Caco-2 (cell line): ENCODE measurements at regions of chr9 and their contacts with region 1.

Region 1: GRCh38 chr9:111975709-111976108 is 79.1 kb downstream of the UGCG start:
- DNase-seq: peak; percentile 45 to 64
- H3K4me3 ChIP-seq: no peak overlapping the region
- H3K4me3 Mint-ChIP-seq: no peak overlapping the region
- H3K27ac Mint-ChIP-seq: no peak overlapping the region
- H3K4me1 ChIP-seq: peaks cover 47% of the 10 kb centered on the region
- H3K4me1 Mint-ChIP-seq: peaks cover 31% of the 10 kb centered on the region
- H3K27me3 ChIP-seq: no peaks in the 10 kb centered on the region
- H3K27me3 Mint-ChIP-seq: no peaks in the 10 kb centered on the region
- CTCF ChIP-seq: peak in 1 of 2 experiments; percentile 21

Region 2: DNA sequence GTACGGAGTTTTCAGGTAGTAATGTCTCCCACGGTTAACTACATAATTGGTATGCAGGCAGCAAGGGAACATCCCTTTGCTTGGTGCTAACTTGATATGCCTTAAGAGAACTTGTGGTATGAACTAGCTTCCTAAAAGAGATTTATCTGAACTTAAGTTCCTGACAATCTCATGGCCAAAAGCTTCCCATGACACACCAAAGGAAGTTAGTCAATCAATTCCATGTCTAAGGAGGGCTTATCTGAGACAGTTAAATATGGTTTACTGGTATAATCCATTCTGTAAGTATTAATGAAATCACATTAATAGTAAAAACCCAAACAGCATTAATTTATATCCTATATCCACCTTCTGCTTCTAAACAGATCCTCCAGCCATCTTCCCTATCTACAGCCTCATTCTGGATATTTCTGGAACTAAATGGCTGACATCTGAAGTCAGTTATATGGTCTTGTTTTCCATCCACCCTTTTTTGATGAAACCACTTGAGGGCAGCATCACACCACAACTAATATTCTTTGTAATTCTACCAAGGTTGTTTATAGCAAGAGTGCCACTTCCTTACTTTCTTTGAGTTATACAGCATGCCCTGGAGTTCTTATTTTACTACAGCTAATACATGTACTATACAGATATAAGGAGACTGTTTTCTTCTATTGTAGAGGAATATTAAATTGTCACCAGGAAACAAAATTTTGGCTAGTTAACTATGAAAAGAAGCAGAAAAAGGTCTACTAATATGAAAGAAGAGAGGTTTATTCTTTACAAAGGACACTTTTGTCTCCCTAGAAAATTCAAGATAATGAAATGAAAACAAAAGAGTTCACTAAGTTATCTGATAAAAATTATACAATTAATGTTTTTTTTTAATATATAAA is 215.7 kb before region 1 on chr9:
- CTCF ChIA-PET with region 1: no interaction called
- POLR2A ChIA-PET with region 1: no interaction called
- intact Hi-C with region 1: loop called (anchors 1 kb)
- DNase-seq: peak; percentile 54 to 70
- H3K4me3 ChIP-seq: no peak overlapping the region
- H3K4me3 Mint-ChIP-seq: no peak overlapping the region
- H3K27ac Mint-ChIP-seq: no peak overlapping the region
- H3K4me1 ChIP-seq: no peaks in the 10 kb centered on the region
- H3K4me1 Mint-ChIP-seq: no peaks in the 10 kb centered on the region
- H3K27me3 ChIP-seq: no peaks in the 10 kb centered on the region
- H3K27me3 Mint-ChIP-seq: no peaks in the 10 kb centered on the region
- CTCF ChIP-seq: peak; percentile 48 to 77

Region 3: DNA sequence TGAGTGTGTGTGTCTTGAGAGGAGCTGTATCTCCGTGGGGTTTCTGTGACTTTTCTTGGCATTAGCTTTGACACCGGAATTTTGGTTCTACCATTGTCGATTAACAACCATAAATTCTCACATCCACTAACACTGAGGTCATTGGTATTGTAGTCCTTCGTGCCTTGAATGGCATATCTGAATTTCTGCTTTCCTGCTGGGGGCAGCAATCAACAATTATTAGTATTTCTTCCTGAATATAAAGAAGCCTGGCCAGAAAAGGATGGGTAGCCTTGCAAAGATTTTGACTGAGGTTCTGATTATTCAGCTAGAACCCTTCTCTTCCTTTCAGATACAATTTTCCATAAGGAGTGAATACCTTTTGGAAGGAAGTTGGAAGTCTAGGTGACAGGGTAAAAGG is 147.5 kb before region 1 on chr9:
- CTCF ChIA-PET with region 1: no interaction called
- POLR2A ChIA-PET with region 1: no interaction called
- intact Hi-C with region 1: loop called (anchors 1 kb)
- DNase-seq: peak in 1 of 2 experiments; percentile 22
- H3K4me3 ChIP-seq: no peak overlapping the region
- H3K4me3 Mint-ChIP-seq: no peak overlapping the region
- H3K27ac Mint-ChIP-seq: no peak overlapping the region
- H3K4me1 ChIP-seq: no peaks in the 10 kb centered on the region
- H3K4me1 Mint-ChIP-seq: no peaks in the 10 kb centered on the region
- H3K27me3 ChIP-seq: no peaks in the 10 kb centered on the region
- H3K27me3 Mint-ChIP-seq: no peaks in the 10 kb centered on the region
- CTCF ChIP-seq: peak in 1 of 2 experiments; percentile 6

Region 4: DNA sequence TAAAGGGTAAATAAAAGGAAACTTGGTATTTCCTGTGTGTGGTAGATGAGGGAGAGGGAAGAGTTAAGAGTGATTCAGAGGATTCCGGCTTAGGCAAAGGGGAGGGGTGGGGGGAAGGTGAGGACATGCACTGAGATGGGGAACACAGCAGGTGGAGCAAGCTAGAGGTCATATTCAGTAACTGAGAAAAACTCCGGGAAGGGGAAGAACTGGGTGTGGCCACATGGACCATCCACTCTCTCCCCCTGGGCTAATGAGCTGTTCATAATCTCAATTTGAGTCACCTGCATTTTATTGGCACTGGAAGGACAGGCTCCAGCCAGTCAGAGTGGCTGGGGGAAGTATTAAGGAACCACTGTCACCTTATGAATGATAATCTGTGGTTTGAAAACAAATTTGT is 124.1 kb before region 1 on chr9:
- CTCF ChIA-PET with region 1: no interaction called
- POLR2A ChIA-PET with region 1: no interaction called
- intact Hi-C with region 1: no loop called
- DNase-seq: peak; percentile 55 to 82
- H3K4me3 ChIP-seq: no peak overlapping the region
- H3K4me3 Mint-ChIP-seq: no peak overlapping the region
- H3K27ac Mint-ChIP-seq: no peak overlapping the region
- H3K4me1 ChIP-seq: peaks cover 38% of the 10 kb centered on the region
- H3K4me1 Mint-ChIP-seq: peaks cover 22% of the 10 kb centered on the region
- H3K27me3 ChIP-seq: no peaks in the 10 kb centered on the region
- H3K27me3 Mint-ChIP-seq: no peaks in the 10 kb centered on the region
- CTCF ChIP-seq: no peak

Region 5: GRCh38 chr9:111909441-111909840 is 66.3 kb before region 1 on chr9:
- CTCF ChIA-PET with region 1: no interaction called
- POLR2A ChIA-PET with region 1: no interaction called
- intact Hi-C with region 1: no loop called
- DNase-seq: no peak
- H3K4me3 ChIP-seq: no peak overlapping the region
- H3K4me3 Mint-ChIP-seq: no peak overlapping the region
- H3K27ac Mint-ChIP-seq: no peak overlapping the region
- H3K4me1 ChIP-seq: peaks cover 15% of the 10 kb centered on the region; the same call in 1 of the 2 replicates
- H3K4me1 Mint-ChIP-seq: peaks cover 14% of the 10 kb centered on the region
- H3K27me3 ChIP-seq: no peaks in the 10 kb centered on the region
- H3K27me3 Mint-ChIP-seq: no peaks in the 10 kb centered on the region
- CTCF ChIP-seq: no peak

Region 6: DNA sequence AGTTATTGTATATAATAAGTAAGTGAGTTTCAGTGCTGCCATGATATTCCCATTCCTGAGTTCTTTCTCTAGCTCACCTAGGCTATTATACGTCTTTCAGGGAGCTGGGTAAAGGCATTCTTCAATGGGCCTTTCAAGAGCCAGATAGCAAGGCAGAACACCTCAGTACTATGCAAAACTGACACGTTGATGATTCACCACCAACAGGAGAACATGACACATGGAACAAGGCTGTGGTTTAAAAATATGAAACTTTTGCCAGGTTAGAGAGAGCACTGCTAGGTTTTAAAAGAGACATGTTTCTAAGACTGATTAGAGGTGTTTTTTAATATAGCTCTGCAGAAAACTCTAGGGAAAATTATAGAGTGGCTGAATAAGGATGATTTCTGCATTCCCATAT is 16.8 kb after region 1 on chr9:
- CTCF ChIA-PET with region 1: no interaction called
- POLR2A ChIA-PET with region 1: no interaction called
- intact Hi-C with region 1: no loop called
- DNase-seq: no peak
- H3K4me3 ChIP-seq: no peak overlapping the region
- H3K4me3 Mint-ChIP-seq: no peak overlapping the region
- H3K27ac Mint-ChIP-seq: no peak overlapping the region
- H3K4me1 ChIP-seq: peaks cover 21% of the 10 kb centered on the region
- H3K4me1 Mint-ChIP-seq: peaks cover 12% of the 10 kb centered on the region
- H3K27me3 ChIP-seq: no peaks in the 10 kb centered on the region
- H3K27me3 Mint-ChIP-seq: no peaks in the 10 kb centered on the region
- CTCF ChIP-seq: no peak